ENCODE measurements at regions of chr1 and their contacts with region 1.

Region 1: GRCh38 chr1:223695941-223696340 is 16.4 kb upstream of the CAPN2 start:
- DNase-seq: no peak
- ATAC-seq: no peak
- H3K4me3 ChIP-seq: no peak overlapping the region
- H3K4me3 Mint-ChIP-seq: no peak overlapping the region
- H3K27ac ChIP-seq: no peak overlapping the region
- H3K27ac Mint-ChIP-seq: no peak overlapping the region
- H3K4me1 ChIP-seq: peaks cover 7% of the 10 kb centered on the region
- H3K4me1 Mint-ChIP-seq: peaks cover 6% of the 10 kb centered on the region
- H3K27me3 ChIP-seq: no peaks in the 10 kb centered on the region
- H3K27me3 Mint-ChIP-seq: no peaks in the 10 kb centered on the region
- CTCF ChIP-seq: no peak

Region 2: DNA sequence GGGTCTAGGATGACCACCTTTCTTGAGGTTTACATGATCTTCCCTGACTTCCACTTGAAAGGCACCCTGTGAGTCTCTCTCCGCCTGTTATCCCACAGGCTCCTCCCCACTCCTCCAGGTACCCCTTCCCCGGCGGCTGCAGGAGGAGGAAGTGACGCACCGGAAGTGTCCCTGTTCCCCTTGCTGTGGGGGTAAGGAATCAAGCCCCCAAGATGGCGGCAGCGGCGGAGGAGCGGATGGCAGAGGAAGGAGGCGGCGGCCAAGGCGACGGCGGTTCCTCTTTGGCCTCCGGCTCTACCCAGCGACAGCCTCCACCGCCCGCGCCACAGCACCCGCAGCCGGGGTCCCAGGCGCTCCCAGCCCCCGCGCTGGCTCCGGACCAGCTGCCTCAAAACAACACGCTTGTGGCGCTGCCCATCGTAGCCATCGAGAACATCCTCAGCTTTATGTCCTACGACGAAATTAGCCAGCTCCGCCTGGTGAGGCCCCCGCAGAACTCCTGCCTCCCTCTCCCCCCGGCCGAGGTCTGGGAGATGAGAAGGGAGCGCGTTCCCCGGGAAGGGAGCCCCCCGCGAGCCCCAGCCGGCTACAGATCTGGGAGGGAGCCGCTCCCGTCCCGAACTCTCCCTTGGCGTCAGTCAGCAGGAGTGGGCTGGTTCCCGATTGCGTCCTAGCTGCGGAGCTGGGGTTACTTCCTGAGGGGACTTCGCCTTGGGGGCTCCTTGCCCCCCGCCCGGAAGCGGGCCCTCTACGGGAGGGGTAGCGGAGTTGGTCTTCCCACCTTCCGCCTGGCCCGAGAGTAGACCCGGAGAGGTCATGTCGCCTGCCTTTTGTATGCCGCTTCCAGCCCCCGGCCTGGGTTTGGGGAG is 418.2 kb after region 1 on chr1 and contains the start of gene FBXO28:
- CTCF ChIA-PET with region 1: no interaction called
- POLR2A ChIA-PET with region 1: no interaction called
- intact Hi-C with region 1: loop called in 1 of 2 experiments (anchors 10 kb)
- DNase-seq: peak; percentile 86 to 96 (median 94)
- ATAC-seq: peak; percentile 92
- H3K4me3 ChIP-seq: peak within 1 kb of the TSS; percentile 78 to 82
- H3K4me3 Mint-ChIP-seq: peak within 1 kb of the TSS; percentile 92
- H3K27ac ChIP-seq: peak within 1 kb of the TSS; percentile 94 to 97
- H3K27ac Mint-ChIP-seq: peak within 1 kb of the TSS; percentile 95
- H3K4me1 ChIP-seq: peaks cover 22% of the 10 kb centered on the region
- H3K4me1 Mint-ChIP-seq: peaks cover 34% of the 10 kb centered on the region
- H3K27me3 ChIP-seq: no peaks in the 10 kb centered on the region
- H3K27me3 Mint-ChIP-seq: peaks cover 12% of the 10 kb centered on the region
- CTCF ChIP-seq: no peak
- total RNA-seq, gene FBXO28: 43.4 to 44.2 TPM

Measured in CD8-positive, alpha-beta T cell (primary cell).